GM10248 (cell line): ENCODE measurements at regions of chr15 and their contacts with region 1.

Region 1: GRCh38 chr15:44738340-44738984 is 2.1 kb downstream of the TRIM69 start:
- DNase-seq: peak; percentile 52
- CTCF ChIP-seq: peak; percentile 63

Region 2: DNA sequence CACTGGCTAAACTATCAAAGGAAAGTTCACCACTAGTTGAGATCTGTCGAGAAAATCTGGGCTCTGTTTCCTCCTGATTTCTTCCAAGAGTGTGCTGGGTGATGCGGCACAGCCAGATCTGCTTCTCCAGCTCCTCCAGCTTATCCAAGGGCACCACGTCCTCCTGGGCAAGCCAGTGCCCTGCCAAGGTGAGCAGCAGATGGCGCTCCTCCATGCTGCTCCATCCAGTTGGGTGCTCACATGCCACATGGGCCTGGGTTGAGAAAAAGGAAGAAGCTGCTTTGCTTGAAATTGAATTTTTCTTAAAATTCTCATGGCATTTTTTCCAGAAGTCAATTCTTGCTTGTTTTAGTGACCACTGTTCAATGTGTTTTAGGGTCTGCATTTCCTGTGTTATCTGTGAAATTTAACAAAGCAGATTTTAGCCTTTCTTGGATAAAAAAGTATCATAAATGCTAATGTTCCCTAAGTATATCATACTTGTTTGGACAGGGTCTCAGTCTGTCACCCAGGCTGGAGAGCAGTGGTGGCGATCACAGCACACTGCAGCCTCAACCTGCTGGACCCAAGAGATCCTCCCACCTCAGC is 154.2 kb before region 1 on chr15:
- CTCF ChIA-PET with region 1: interaction called, 50 read pairs
- POLR2A ChIA-PET with region 1: interaction called, 3 read pairs
- DNase-seq: peak; percentile 37
- CTCF ChIP-seq: peak; percentile 51

Region 3: DNA sequence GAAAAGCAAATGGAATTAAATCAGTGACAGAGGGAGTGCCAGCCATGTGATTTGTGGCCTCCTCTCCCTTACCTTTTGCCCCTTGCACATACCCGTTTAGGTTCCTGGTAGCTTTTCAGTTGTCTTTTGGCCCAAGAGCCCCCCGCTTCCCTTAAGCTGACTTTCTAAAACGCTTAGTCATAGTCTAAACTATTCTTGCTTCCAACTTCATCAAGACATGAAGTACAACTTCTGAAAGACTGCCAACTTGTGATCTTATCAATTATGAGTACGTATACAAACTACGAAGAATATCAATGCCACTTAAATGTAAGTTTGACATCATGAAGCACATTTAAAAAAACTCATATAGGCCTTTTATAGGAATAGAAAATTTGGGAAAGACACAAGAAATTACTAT is 139.6 kb before region 1 on chr15:
- CTCF ChIA-PET with region 1: interaction called, 10 read pairs
- POLR2A ChIA-PET with region 1: no interaction called
- DNase-seq: no peak
- CTCF ChIP-seq: no peak

Region 4: GRCh38 chr15:44692659-44693058 is 45.8 kb before region 1 on chr15:
- CTCF ChIA-PET with region 1: no interaction called
- POLR2A ChIA-PET with region 1: no interaction called
- DNase-seq: no peak
- CTCF ChIP-seq: no peak

Region 5: GRCh38 chr15:44711356-44712107 is 26.9 kb before region 1 on chr15 and contains the start of gene B2M:
- CTCF ChIA-PET with region 1: interaction called, 117 read pairs
- POLR2A ChIA-PET with region 1: interaction called, 41 read pairs
- DNase-seq: peak; percentile 94
- CTCF ChIP-seq: no peak

Region 6: DNA sequence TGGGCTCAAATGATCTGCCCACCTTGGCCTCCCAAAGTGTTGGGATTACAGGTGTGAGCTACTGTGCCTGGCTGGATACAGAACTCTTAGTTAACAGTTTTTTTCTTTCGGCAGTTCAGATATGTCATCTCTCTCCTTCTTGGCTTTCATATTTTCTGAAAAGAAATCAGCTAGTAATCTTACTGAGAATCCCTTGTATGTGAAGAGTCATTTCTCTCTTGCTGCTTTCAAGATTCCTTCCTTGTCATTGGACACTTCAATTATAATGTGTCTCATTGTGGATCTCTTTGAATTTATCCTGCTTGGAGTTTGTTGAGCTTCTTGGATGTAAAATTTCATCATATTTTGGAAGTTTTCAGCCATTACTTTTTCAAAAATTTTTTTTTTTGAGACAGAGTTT is 14.9 kb after region 1 on chr15:
- CTCF ChIA-PET with region 1: interaction called, 13 read pairs
- POLR2A ChIA-PET with region 1: no interaction called
- DNase-seq: no peak
- CTCF ChIP-seq: no peak